Esophagus squamous epithelium (tissue), 5 donors: ENCODE measurements at regions of chr3 and their contacts with region 1.

Region 1: GRCh38 chr3:134212906-134213665 is 37.6 kb downstream of the RYK start:
- DNase-seq: no peak
- H3K4me3 ChIP-seq: no peak overlapping the region
- H3K27ac ChIP-seq: no peak overlapping the region
- H3K4me1 ChIP-seq: peaks cover 0 to 14% (median 0%) of the 10 kb centered on the region in 3 donors
- H3K27me3 ChIP-seq: no peaks in the 10 kb centered on the region
- CTCF ChIP-seq: peak; percentile 89 to 98 (median 95)
- POLR2A ChIP-seq: no peak

Region 2: GRCh38 chr3:134485718-134486576 is 272.9 kb after region 1 on chr3 and contains the starts of genes ANAPC13 and CEP63:
- intact Hi-C with region 1: loop called (anchors 10 kb)
- DNase-seq: peak; percentile 91
- H3K4me3 ChIP-seq: peak within 1 kb of the TSS; percentile 75 to 96 (median 87)
- H3K27ac ChIP-seq: peak within 1 kb of the TSS; percentile 91 to 98 (median 96)
- H3K4me1 ChIP-seq: peaks cover 15 to 54% (median 28%) of the 10 kb centered on the region in 3 donors
- H3K27me3 ChIP-seq: no peaks in the 10 kb centered on the region
- CTCF ChIP-seq: peak in 2 of 6 experiments; percentile 10 to 21
- POLR2A ChIP-seq: peak in 2 of 4 donors; percentile 53 to 85
- total RNA-seq, gene ANAPC13: 20.7 to 38.7 (median 26.0) TPM
- total RNA-seq, gene CEP63: 7.7 to 18.1 (median 14.4) TPM